CD4-positive, alpha-beta memory T cell (primary cell): ENCODE measurements at regions of chr4 and their contacts with region 1.

Region 1: GRCh38 chr4:87058356-87059073 is 123.7 kb downstream of the AFF1 start:
- DNase-seq: peak in 1 of 5 donors; percentile 45
- H3K4me3 ChIP-seq: no peak overlapping the region
- H3K4me3 Mint-ChIP-seq: peak overlapping the region in 4 of 8 donors; percentile 1 to 18 (median 10)
- H3K27ac ChIP-seq: no peak overlapping the region
- H3K27ac Mint-ChIP-seq: peak overlapping the region in 5 of 7 donors; percentile 43 to 77 (median 65)
- H3K4me1 ChIP-seq: peaks cover 54% of the 10 kb centered on the region
- H3K4me1 Mint-ChIP-seq: peaks cover 47 to 80% (median 59%) of the 10 kb centered on the region in 4 donors
- H3K27me3 ChIP-seq: no peaks in the 10 kb centered on the region
- H3K27me3 Mint-ChIP-seq: no peaks in the 10 kb centered on the region

Region 2: GRCh38 chr4:87017580-87018342 is 40.8 kb before region 1 on chr4:
- CTCF ChIA-PET with region 1: no interaction called
- POLR2A ChIA-PET with region 1: no interaction called
- intact Hi-C with region 1: loop called (anchors 5 kb)
- DNase-seq: no peak
- H3K4me3 ChIP-seq: no peak overlapping the region
- H3K4me3 Mint-ChIP-seq: peak overlapping the region in 3 of 8 donors; percentile 40 to 67 (median 52)
- H3K27ac ChIP-seq: no peak overlapping the region
- H3K27ac Mint-ChIP-seq: peak overlapping the region in 3 of 7 donors; percentile 32 to 88 (median 48)
- H3K4me1 ChIP-seq: peaks cover 73% of the 10 kb centered on the region
- H3K4me1 Mint-ChIP-seq: peaks cover 54 to 92% (median 73%) of the 10 kb centered on the region in 4 donors
- H3K27me3 ChIP-seq: no peaks in the 10 kb centered on the region
- H3K27me3 Mint-ChIP-seq: no peaks in the 10 kb centered on the region